Activated CD4-positive, alpha-beta memory T cell treated with anti-CD3 and anti-CD28 coated beads for 36 hours (primary cell): ENCODE measurements at regions of chr6 and their contacts with region 1.

Region 1: DNA sequence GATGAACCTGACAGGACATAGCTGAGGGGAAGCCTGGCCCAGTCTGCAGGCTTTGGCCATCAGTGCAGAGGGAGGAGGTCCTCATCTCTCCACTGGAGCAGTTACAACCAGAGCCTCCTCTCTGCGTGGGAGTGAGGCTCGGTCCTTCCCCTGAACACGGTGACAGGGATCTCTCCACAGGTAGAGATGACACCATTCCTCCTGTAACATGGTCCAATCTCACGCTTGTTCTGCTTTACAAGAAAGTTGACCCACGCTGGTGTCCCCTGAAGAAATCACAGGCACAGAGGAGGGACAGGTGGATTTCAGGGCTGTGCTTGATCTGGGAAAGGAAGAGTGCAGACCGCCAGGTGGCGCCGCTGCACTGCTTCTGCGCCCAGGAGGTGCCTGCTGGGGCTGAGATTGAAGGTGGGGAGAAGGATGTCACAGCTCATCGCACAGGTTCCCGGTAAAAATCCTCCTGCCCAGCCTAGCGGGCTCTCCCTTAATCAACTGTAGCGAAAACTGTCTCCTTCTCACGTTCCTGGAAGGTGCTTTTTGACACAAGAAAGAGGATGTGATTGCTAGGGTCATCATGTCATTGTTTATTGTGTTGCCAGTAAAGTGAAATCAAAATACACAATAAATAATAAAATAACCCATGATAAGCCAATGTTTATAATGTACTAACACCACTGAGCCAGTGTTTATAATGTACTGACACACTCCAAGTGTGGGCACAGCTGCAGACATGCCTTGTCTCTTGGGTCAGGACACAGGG is 20.4 kb downstream of the HLA-G start:
- DNase-seq: peak; percentile 90
- H3K4me3 Mint-ChIP-seq: no peak overlapping the region
- H3K27ac Mint-ChIP-seq: peak overlapping the region; percentile 44
- H3K4me1 Mint-ChIP-seq: peaks cover 25% of the 10 kb centered on the region
- H3K27me3 Mint-ChIP-seq: peaks cover 31% of the 10 kb centered on the region

Region 2: GRCh38 chr6:29964887-29965562 is 117.0 kb after region 1 on chr6:
- CTCF ChIA-PET with region 1: interaction called, 20 read pairs
- POLR2A ChIA-PET with region 1: no interaction called
- intact Hi-C with region 1: loop called (anchors 1 kb)
- DNase-seq: peak; percentile 88
- H3K4me3 Mint-ChIP-seq: peak overlapping the region; percentile 82
- H3K27ac Mint-ChIP-seq: peak overlapping the region; percentile 95
- H3K4me1 Mint-ChIP-seq: peaks cover 43% of the 10 kb centered on the region
- H3K27me3 Mint-ChIP-seq: no peaks in the 10 kb centered on the region

Region 3: DNA sequence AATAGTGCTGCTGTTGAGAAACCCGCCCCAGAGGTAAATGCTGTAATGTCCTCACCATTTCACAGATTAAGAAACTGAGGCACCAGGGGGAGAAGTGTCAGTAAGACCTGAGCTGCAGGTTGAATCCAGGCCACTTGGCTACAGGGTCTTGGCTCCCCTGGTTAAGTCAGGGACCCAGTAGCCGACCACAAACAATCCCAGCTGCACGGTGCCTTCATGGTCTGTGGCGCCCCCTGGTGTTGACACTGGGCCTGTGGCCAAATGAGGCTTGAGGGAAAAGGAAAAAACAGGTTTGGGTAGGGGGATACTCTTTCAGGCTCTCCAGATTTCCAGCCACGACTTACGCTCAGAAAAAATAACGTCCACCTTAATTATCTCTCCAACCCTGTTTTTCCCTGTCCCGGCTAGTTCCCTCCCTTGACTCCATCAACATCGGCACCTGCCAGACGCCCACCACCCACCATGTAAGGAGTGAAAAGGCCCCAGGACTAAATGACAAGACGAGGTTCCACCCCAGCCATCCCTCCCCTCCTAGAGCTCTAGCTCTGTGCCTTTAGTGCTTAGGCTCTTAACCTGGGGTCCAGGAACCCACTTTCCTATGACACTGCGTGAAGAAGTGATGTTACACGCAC is 165.4 kb after region 1 on chr6:
- CTCF ChIA-PET with region 1: interaction called, 40 read pairs
- POLR2A ChIA-PET with region 1: no interaction called
- intact Hi-C with region 1: loop called (anchors 1 kb)
- DNase-seq: peak; percentile 61
- H3K4me3 Mint-ChIP-seq: no peak overlapping the region
- H3K27ac Mint-ChIP-seq: no peak overlapping the region
- H3K4me1 Mint-ChIP-seq: no peaks in the 10 kb centered on the region
- H3K27me3 Mint-ChIP-seq: no peaks in the 10 kb centered on the region

Region 4: GRCh38 chr6:30163090-30163917 is 315.3 kb after region 1 on chr6 and contains the start of gene TRIM15:
- CTCF ChIA-PET with region 1: no interaction called
- POLR2A ChIA-PET with region 1: no interaction called
- intact Hi-C with region 1: loop called (anchors 5 kb)
- DNase-seq: peak; percentile 87
- H3K4me3 Mint-ChIP-seq: peak within 1 kb of the TSS; percentile 5
- H3K27ac Mint-ChIP-seq: peak within 1 kb of the TSS; percentile 13
- H3K4me1 Mint-ChIP-seq: peaks cover 50% of the 10 kb centered on the region
- H3K27me3 Mint-ChIP-seq: peaks cover 9% of the 10 kb centered on the region
- total RNA-seq, gene TRIM15: 0.63 to 1.6 TPM